K562 (cell line): ENCODE measurements at regions of chr10 and their contacts with region 1.

Region 1: DNA sequence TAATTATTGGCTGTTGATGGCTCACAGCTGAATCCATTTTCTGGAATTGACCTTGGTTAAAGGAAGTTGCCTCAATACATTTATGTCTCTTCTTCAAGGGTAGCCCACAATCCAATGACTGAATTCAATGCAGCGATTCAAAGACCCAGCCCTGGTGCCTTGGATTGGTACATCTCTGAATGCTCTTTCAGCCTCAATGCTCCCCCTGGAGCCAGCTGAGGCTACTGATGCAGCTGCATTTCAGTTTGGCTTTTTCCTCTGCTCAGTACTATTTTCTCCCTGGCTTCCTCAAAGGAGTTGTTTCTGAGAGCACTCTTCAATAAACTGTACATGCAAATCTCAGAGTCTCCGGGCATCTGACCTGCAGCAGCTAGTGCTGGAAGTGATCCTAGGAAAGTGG is 636 bp upstream of the EBLN1 start:
- DNase-seq: peak in 2 of 4 experiments; percentile 30 to 38
- ATAC-seq: peak; percentile 87
- H3K4me3 ChIP-seq: no peak overlapping the region
- H3K27ac ChIP-seq: no peak overlapping the region
- H3K4me1 ChIP-seq: peaks cover 0 to 12% of the 10 kb centered on the region in 2 experiments; a peak in 3 of 5 replicates
- H3K27me3 ChIP-seq: no peaks in the 10 kb centered on the region
- CTCF ChIP-seq: peak; percentile 42 to 46 (median 46); a peak in 5 of 6 replicates
- EP300 ChIP-seq: no peak
- POLR2A ChIP-seq: no peak
- RAD21 ChIP-seq: peak in 1 of 2 experiments; percentile 55; a peak in 2 of 4 replicates

Region 2: GRCh38 chr10:22103701-22104470 is 114.6 kb before region 1 on chr10:
- CTCF ChIA-PET with region 1: no interaction called
- POLR2A ChIA-PET with region 1: interaction called, 3 read pairs
- in situ Hi-C with region 1: no loop called
- intact Hi-C with region 1: loop called (anchors 10 kb)
- DNase-seq: peak; percentile 26 to 47 (median 38)
- ATAC-seq: peak; percentile 94
- H3K4me3 ChIP-seq: no peak overlapping the region
- H3K27ac ChIP-seq: no peak overlapping the region
- H3K4me1 ChIP-seq: no peaks in the 10 kb centered on the region
- H3K27me3 ChIP-seq: no peaks in the 10 kb centered on the region
- CTCF ChIP-seq: peak; percentile 56 to 69 (median 63); a peak in 5 of 6 replicates
- EP300 ChIP-seq: no peak
- POLR2A ChIP-seq: no peak
- RAD21 ChIP-seq: peak; percentile 37 to 65

Region 3: DNA sequence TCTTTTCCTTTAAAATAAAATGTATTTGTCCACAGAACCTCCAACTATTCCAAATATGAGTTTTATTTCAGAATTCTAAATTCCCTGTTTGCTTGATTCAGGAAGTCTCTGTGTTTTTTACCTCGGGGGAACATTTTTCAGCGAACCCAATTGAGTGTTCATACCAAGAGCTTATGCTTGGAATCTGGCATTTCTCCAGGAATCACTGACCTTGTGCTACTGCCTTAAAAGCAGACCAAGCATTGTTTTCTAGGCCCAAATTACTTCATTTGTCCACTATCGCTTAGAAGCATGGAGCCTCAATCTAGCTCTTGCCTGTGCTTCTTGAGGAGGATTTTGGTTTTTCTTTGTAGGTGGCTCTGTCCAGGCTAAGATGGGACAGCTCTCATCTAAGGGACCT is 60.0 kb before region 1 on chr10:
- CTCF ChIA-PET with region 1: no interaction called
- POLR2A ChIA-PET with region 1: no interaction called
- in situ Hi-C with region 1: no loop called
- intact Hi-C with region 1: no loop called
- DNase-seq: peak in 1 of 4 experiments; percentile 14
- ATAC-seq: no peak
- H3K4me3 ChIP-seq: no peak overlapping the region
- H3K27ac ChIP-seq: no peak overlapping the region
- H3K4me1 ChIP-seq: peaks cover 5 to 20% of the 10 kb centered on the region in 2 experiments; a peak in 3 of 5 replicates
- H3K27me3 ChIP-seq: no peaks in the 10 kb centered on the region
- CTCF ChIP-seq: no peak
- EP300 ChIP-seq: no peak
- POLR2A ChIP-seq: no peak
- RAD21 ChIP-seq: no peak

Region 4: DNA sequence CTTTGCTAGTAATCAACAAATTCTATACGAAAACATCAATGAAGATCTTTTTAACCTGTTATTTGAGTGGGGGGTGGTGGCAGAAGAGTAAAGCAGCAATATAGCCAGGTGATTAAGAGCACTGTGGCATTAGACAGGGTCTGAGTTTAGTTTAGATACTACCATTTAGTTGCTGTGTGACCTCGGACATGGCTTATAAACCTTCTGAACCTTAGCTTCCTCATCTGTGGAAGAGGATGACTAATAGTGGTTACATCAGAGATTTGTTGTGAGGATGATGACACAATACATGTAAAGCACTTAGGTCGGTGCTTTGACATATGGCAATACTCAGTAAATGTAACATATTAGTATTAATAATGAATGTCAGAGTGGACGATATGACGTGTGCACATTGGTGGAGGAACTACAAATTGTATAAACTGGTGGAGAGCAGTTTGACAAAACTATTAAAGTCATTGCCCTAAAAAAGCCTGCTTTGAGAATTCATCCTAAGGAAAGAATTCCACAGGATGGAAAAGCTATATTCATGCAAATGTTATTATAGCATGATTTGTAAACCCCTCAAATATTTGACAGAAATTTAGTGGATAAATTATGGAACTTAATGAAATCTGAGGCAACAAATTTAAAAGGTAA is 151.1 kb after region 1 on chr10:
- CTCF ChIA-PET with region 1: no interaction called
- POLR2A ChIA-PET with region 1: no interaction called
- in situ Hi-C with region 1: no loop called
- intact Hi-C with region 1: no loop called
- DNase-seq: peak in 2 of 4 experiments; percentile 37 to 62
- ATAC-seq: peak; percentile 85
- H3K4me3 ChIP-seq: no peak overlapping the region
- H3K27ac ChIP-seq: peak overlapping the region; percentile 52
- H3K4me1 ChIP-seq: peaks cover 4 to 23% of the 10 kb centered on the region in 2 experiments
- H3K27me3 ChIP-seq: no peaks in the 10 kb centered on the region
- CTCF ChIP-seq: no peak
- EP300 ChIP-seq: 0 out of 2 replicates have a peak, but pooled peaks have one; percentile 9
- POLR2A ChIP-seq: no peak
- RAD21 ChIP-seq: no peak